MCF 10A (cell line): ENCODE measurements at regions of chr10 and their contacts with region 1.

Region 1: DNA sequence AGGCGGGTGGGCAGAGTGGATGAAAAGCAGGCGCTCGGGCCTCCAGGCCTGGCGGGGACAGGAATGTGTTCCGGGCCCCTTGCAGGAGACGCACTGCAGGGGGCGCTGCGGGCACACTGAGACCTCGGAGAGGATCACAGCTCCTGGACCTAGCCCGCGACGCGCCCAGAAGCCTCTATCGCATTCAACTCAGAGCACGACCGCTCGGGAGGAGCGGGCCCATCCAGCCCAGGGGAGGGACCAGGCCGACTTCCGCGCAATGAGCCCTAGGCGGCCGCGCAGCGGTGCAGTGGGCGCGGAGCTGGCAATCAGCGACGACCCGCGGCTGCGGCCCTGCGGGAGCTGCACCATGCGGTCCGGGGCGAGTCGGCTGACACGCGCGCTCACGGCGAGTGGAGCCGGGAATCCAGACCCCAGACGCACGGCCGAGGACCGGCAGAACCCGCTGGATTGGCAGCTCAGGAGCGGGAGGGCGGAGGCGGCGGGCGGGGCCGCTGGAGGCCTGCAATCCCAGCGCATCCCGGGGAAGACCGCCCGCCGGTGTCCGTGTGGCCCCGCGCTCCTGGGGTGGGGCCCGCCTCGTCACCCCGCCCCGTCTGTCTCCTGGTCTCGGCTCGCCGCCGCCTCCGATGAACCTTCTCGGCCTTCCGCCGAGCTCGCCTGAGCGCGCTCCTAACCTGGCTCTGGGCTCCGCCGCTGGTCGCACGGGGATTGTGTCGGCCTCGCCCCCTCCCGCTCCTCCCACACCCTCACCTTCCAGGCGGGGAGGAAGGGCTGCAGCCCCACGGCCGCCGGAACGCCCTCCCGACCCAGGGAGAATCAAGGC is 33.5 kb upstream of the GRID1 start:
- DNase-seq: peak; percentile 96
- H3K4me3 Mint-ChIP-seq: peak overlapping the region; percentile 74
- H3K27ac Mint-ChIP-seq: peak overlapping the region; percentile 91
- H3K4me1 Mint-ChIP-seq: peaks cover 16% of the 10 kb centered on the region
- H3K27me3 Mint-ChIP-seq: peaks cover 15% of the 10 kb centered on the region
- CTCF ChIP-seq: peak; percentile 95

Region 2: GRCh38 chr10:85873063-85873462 is 527.0 kb before region 1 on chr10:
- CTCF ChIA-PET with region 1: no interaction called
- POLR2A ChIA-PET with region 1: no interaction called
- intact Hi-C with region 1: no loop called
- DNase-seq: no peak
- H3K4me3 Mint-ChIP-seq: no peak overlapping the region
- H3K27ac Mint-ChIP-seq: no peak overlapping the region
- H3K4me1 Mint-ChIP-seq: no peaks in the 10 kb centered on the region
- H3K27me3 Mint-ChIP-seq: no peaks in the 10 kb centered on the region
- CTCF ChIP-seq: no peak

Region 3: GRCh38 chr10:86349474-86349873 is 50.6 kb before region 1 on chr10:
- CTCF ChIA-PET with region 1: no interaction called
- POLR2A ChIA-PET with region 1: no interaction called
- intact Hi-C with region 1: no loop called
- DNase-seq: no peak
- H3K4me3 Mint-ChIP-seq: no peak overlapping the region
- H3K27ac Mint-ChIP-seq: no peak overlapping the region
- H3K4me1 Mint-ChIP-seq: peaks cover 26% of the 10 kb centered on the region
- H3K27me3 Mint-ChIP-seq: no peaks in the 10 kb centered on the region
- CTCF ChIP-seq: no peak

Region 4: GRCh38 chr10:86419101-86419500 is 19.0 kb after region 1 on chr10:
- CTCF ChIA-PET with region 1: interaction called, 11 read pairs
- POLR2A ChIA-PET with region 1: interaction called, 3 read pairs
- intact Hi-C with region 1: no loop called
- DNase-seq: no peak
- H3K4me3 Mint-ChIP-seq: no peak overlapping the region
- H3K27ac Mint-ChIP-seq: no peak overlapping the region
- H3K4me1 Mint-ChIP-seq: no peaks in the 10 kb centered on the region
- H3K27me3 Mint-ChIP-seq: peaks cover 46% of the 10 kb centered on the region
- CTCF ChIP-seq: no peak

Region 5: GRCh38 chr10:86500846-86501245 is 100.8 kb after region 1 on chr10:
- CTCF ChIA-PET with region 1: no interaction called
- POLR2A ChIA-PET with region 1: no interaction called
- intact Hi-C with region 1: no loop called
- DNase-seq: no peak
- H3K4me3 Mint-ChIP-seq: no peak overlapping the region
- H3K27ac Mint-ChIP-seq: peak overlapping the region; percentile 74
- H3K4me1 Mint-ChIP-seq: peaks cover 7% of the 10 kb centered on the region
- H3K27me3 Mint-ChIP-seq: no peaks in the 10 kb centered on the region
- CTCF ChIP-seq: no peak

Region 6: DNA sequence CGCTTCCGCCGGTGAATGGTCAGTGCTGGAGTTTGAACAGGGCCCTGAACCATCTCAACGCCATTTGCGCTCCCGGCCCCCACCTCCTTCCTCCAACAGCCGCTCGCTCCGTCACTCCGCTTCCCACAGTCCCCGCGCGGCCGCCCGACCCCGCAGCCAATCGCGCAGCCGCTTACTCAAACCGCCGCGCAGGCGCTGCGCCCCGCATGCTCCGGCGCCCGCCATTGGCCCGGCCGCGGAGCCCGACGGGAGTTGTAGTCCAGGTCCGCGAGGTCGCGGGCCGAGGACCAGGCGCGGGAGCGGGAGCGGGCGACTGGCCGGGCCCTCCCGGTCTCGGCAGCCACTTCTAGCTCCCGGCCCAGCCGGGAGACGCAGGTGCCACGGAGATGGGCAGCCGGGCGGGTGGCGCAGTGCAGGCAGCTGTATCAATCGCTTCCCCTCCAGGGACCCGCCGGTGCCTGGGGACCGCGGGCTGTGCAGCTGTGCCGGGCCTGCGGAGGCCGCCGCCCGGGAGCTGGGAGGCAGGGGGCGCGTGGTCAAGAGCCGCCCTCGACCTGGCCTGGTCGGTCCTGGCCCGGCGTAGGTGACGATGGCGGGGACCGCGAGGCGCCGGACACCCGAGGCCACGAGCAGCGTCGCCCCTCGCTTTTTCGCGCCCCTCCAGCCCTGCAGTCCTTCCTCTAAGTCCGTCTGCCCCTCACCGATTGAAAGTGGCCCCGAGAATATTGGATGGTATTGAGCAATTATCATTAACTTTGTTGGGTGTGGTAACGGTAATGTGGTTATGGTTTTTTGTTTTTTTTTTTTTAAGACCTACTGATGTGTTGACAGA is 121.8 kb after region 1 on chr10 and contains the start of gene WAPL:
- CTCF ChIA-PET with region 1: interaction called, 3 read pairs
- POLR2A ChIA-PET with region 1: interaction called, 24 read pairs
- intact Hi-C with region 1: loop called (anchors 5 kb)
- DNase-seq: peak; percentile 91
- H3K4me3 Mint-ChIP-seq: peak within 1 kb of the TSS; percentile 98
- H3K27ac Mint-ChIP-seq: peak within 1 kb of the TSS; percentile 93
- H3K4me1 Mint-ChIP-seq: peaks cover 42% of the 10 kb centered on the region
- H3K27me3 Mint-ChIP-seq: no peaks in the 10 kb centered on the region
- CTCF ChIP-seq: no peak
- total RNA-seq, gene WAPL: 42.7 and 45.2 TPM in 2 replicates

Region 7: DNA sequence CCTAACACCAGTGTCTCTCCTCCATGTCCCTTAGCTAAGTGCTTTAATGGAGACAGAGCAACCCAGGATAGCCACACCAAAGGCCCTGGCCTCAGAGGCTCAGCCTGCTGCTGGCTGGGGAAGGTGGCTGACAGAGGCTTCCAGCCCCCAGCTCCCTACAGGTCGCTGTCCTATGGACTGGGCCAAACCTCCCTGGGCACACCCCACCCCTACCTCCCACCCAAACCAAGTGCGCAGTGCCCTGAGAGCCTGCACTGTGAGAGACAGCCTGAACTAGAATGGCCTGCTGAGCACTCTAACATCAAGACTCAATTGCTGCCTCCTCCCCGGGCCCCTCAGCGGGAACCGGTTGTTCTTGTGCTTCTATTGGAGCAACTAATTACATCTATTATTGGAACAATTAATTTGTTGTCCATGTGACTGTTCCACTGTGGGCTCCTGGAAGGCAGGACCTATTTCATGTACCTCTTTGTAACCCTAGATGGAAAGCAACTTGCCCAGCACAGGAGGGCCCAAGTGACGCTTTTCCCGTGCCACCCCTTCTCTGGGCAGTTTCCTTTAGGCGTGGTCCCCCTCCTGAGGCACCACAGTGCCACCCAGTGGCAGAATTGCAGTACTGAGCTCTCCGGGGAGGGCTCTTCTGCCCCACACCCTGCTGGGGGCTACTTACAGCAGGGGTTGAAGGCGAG is 185.1 kb after region 1 on chr10:
- CTCF ChIA-PET with region 1: interaction called, 4 read pairs
- POLR2A ChIA-PET with region 1: interaction called, 8 read pairs
- intact Hi-C with region 1: loop called (anchors 1 kb)
- DNase-seq: peak; percentile 74
- H3K4me3 Mint-ChIP-seq: no peak overlapping the region
- H3K27ac Mint-ChIP-seq: no peak overlapping the region
- H3K4me1 Mint-ChIP-seq: no peaks in the 10 kb centered on the region
- H3K27me3 Mint-ChIP-seq: no peaks in the 10 kb centered on the region
- CTCF ChIP-seq: peak; percentile 91

Region 8: GRCh38 chr10:86770417-86770960 is 370.4 kb after region 1 on chr10:
- CTCF ChIA-PET with region 1: no interaction called
- POLR2A ChIA-PET with region 1: no interaction called
- intact Hi-C with region 1: no loop called
- DNase-seq: peak; percentile 20
- H3K4me3 Mint-ChIP-seq: no peak overlapping the region
- H3K27ac Mint-ChIP-seq: no peak overlapping the region
- H3K4me1 Mint-ChIP-seq: peaks cover 25% of the 10 kb centered on the region
- H3K27me3 Mint-ChIP-seq: no peaks in the 10 kb centered on the region
- CTCF ChIP-seq: no peak